ENCODE measurements at regions of chr7 and their contacts with region 1.

Region 1: DNA sequence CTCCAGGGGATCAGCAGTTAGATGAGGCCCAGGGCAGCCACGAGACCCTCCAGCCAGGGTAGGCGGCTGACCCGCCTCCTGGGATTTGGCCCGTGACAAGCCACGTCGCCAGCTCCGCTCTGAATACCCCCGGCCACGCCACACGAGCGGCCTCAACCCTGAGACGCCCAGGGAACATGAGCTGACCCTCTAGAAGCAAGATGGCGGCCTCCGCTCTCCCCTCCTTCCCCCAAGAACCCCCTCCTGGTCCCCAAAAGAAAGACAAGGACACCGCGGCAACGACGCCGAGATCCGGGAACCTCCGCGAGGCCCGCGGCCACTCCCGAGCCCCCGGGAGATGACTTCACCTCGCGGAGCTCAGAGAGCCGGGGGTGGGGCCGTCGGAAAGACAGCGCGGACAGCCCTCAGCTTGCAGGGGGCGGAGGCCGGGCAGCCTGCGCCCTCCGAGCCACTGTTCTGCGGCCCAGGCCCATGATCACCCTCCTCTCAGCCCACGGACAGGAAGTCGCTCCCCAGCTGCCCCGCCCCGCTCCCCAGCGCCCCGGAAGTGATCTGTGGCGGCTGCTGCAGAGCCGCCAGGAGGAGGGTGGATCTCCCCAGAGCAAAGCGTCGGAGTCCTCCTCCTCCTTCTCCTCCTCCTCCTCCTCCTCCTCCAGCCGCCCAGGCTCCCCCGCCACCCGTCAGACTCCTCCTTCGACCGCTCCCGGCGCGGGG is at the start of gene RALA:
- DNase-seq: peak; percentile 93 to 97
- ATAC-seq: peak; percentile 99
- H3K4me3 ChIP-seq: peak within 1 kb of the TSS; percentile 94
- H3K27ac ChIP-seq: peak within 1 kb of the TSS; percentile 92
- H3K4me1 ChIP-seq: peaks cover 37% of the 10 kb centered on the region
- H3K27me3 ChIP-seq: no peaks in the 10 kb centered on the region
- CTCF ChIP-seq: no peak
- total RNA-seq, gene RALA: 15.7 to 19.3 (median 17.7) TPM

Region 2: DNA sequence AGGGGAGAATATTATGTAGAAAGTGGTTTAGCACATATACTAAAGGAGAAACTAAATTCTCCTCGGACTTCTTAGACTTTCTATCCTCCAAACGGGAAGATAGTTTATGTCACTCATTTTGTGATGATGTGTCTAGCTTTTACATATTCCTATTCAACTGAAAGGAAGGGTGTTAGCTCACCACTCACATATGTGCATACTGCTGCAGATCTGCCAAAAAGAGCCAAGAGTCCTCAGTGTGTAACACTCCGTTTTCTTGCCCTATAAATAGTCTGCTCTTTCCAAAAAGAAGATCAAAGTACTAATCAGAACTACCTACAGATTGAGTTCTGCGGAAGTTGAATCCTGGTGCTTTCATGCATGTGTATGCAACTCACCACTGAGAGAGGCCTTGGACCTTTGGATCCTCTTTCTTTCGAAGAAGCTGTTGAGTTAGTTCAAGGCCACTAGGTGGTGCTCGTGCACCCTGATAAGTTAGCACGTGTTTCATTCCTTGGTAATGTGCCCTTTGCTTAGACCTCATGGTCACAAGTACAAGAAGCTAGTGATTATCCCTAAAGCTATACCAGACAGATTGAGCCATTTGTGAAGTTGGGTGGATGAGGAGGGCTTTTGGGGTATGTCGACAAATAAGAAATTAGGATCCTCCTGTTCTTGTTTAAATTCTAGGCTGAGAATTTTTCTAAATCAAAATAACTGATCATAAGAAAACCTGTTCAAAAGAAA is 42.9 kb before region 1 on chr7:
- intact Hi-C with region 1: loop called in 1 of 2 experiments (anchors 5 kb)
- DNase-seq: peak; percentile 62 to 78
- ATAC-seq: peak; percentile 90 to 99 (median 92)
- H3K4me3 ChIP-seq: no peak overlapping the region
- H3K27ac ChIP-seq: no peak overlapping the region
- H3K4me1 ChIP-seq: no peaks in the 10 kb centered on the region
- H3K27me3 ChIP-seq: no peaks in the 10 kb centered on the region
- CTCF ChIP-seq: peak; percentile 95

Region 3: DNA sequence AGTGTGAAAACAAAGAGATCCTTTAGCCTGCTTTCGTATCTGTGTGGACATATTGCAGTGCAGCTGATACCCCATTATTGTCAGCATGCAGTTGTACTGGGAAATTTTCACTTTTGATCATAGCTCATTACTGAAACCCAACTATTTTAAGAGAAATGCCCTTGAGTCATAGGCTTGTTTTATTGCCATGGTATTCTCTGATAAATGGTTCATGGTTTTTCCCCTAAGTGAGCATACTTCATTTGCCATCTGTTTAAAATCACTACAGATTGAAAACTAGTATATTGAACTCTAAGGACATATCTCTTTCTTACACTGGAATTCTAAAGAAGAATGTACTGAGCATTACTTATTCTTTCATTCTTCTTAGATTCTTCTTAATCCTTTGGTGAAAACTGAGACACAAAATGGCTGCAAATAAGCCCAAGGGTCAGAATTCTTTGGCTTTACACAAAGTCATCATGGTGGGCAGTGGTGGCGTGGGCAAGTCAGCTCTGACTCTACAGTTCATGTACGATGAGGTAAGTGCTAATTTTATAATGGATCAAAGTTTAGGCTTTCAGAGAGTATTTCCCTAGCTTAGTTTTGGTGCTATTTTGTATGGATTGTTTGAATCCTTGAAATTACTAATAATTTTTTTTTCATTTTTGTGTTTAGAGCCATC is 63.2 kb after region 1 on chr7:
- intact Hi-C with region 1: loop called (anchors 10 kb)
- DNase-seq: no peak
- ATAC-seq: no peak
- H3K4me3 ChIP-seq: no peak overlapping the region
- H3K27ac ChIP-seq: no peak overlapping the region
- H3K4me1 ChIP-seq: peaks cover 21% of the 10 kb centered on the region
- H3K27me3 ChIP-seq: no peaks in the 10 kb centered on the region
- CTCF ChIP-seq: no peak

Region 4: DNA sequence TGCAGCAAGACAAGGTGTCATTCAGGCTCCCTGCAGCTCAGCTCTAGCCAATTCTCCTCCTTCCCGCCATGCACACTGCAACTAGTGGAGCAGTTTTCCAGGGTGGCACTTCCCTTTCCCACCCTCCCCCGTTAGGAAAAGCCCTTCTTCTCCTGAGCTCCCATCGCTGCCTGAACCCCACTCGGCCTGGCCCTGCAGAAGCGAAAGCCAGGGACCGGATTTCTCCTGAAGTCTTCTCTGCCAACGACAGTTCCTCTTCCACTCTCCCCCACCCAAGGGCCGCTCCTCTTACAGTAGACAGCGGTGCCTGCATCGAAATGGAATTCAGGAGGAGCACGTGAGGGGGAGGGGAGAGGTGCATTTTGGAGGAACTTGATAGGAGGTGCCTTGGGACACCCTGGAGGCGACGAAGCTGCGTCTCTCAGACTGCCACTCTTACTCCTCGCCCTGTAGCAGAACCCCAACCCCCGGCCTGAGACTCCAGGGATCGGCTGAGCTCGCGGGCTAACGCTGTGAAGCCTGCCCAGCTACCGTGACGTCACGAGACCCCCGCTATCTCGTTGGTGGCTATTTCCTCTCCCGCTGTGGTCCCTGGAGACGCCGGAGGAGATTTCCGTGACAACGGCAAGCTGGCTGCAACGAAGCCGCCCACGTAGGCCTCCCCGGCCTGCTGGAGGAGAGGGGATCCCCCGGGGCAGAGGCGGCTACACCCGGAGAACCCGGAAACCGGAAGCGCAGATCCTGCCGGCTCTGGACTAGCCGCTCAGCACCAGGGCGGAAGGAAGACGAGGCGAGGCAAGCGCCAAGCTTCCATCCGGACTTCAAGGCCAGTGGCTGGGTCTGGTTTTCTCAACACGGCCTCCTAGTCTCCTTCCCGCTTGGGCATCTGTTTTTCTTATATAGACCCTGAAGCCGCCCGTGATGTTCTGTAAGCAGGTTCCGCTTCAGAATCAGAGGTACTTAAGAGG is 109.9 kb after region 1 on chr7:
- intact Hi-C with region 1: loop called in 1 of 2 experiments (anchors 5 kb)
- DNase-seq: peak; percentile 97 to 98
- ATAC-seq: peak; percentile 97 to 99 (median 98)
- H3K4me3 ChIP-seq: peak overlapping the region; percentile 79
- H3K27ac ChIP-seq: peak overlapping the region; percentile 49
- H3K4me1 ChIP-seq: peaks cover 10% of the 10 kb centered on the region
- H3K27me3 ChIP-seq: no peaks in the 10 kb centered on the region
- CTCF ChIP-seq: no peak

Region 5: GRCh38 chr7:40077849-40078248 is 454.7 kb after region 1 on chr7:
- intact Hi-C with region 1: loop called in 1 of 2 experiments (anchors 5 kb)
- DNase-seq: no peak
- ATAC-seq: no peak
- H3K4me3 ChIP-seq: no peak overlapping the region
- H3K27ac ChIP-seq: no peak overlapping the region
- H3K4me1 ChIP-seq: no peaks in the 10 kb centered on the region
- H3K27me3 ChIP-seq: no peaks in the 10 kb centered on the region
- CTCF ChIP-seq: no peak

Measured in psoas muscle (tissue), 8 donors.